ENCODE measurements at regions of chr12 and their contacts with region 1.

Region 1: DNA sequence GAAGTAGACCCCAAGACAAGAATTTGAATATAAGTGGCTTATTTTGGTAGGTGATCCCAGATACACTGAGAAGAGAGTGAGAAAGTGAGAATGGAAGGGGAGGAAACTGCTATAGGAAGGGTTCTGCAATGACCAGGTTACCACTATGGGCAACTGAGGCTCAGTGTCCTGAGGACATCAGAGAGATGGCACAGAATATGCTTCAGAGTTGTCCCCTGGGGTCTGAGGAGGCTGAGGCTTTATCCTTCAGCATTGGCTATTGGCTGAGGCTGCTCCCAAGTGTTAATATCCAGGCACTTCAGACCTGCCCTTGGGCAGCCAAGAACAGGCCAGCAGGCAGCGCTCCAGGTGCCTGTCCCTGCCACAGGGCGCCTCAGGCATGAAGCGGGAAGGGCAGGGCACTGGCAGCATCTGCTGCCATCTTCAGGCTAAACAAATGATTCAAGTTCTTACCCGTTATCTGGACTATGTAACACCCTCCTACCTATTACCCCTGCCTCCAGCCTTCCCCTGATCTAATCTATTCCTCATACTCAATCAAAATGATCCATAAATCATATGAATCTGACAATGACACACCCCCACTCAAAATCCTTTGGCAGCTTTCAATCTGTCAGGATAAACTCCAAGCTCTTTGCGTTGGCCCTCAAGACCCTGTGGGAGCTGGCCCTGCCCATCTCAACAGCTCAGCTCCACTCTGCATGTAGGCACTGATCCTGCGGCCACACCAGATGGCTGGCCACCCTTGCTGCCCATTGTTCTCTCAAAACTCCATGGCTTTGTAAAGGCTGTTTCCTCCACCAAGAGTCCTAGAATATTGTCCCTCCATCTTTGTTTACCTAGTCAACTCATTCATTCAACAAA is 42.4 kb downstream of the CKAP4 start:
- DNase-seq: peak; percentile 81

Region 2: GRCh38 chr12:105420659-105421240 is 784.7 kb before region 1 on chr12:
- intact Hi-C with region 1: loop called (anchors 2 kb)
- DNase-seq: peak; percentile 82

Region 3: GRCh38 chr12:105986779-105987684 is 218.4 kb before region 1 on chr12:
- intact Hi-C with region 1: loop called (anchors 10 kb)
- DNase-seq: no peak

Region 4: GRCh38 chr12:106123551-106124081 is 81.8 kb before region 1 on chr12:
- intact Hi-C with region 1: no loop called
- DNase-seq: no peak

Measured in cardiac septum (tissue), 1 donor.